GM12878 (cell line): ENCODE measurements at regions of chr16 and their contacts with region 1.

Region 1: DNA sequence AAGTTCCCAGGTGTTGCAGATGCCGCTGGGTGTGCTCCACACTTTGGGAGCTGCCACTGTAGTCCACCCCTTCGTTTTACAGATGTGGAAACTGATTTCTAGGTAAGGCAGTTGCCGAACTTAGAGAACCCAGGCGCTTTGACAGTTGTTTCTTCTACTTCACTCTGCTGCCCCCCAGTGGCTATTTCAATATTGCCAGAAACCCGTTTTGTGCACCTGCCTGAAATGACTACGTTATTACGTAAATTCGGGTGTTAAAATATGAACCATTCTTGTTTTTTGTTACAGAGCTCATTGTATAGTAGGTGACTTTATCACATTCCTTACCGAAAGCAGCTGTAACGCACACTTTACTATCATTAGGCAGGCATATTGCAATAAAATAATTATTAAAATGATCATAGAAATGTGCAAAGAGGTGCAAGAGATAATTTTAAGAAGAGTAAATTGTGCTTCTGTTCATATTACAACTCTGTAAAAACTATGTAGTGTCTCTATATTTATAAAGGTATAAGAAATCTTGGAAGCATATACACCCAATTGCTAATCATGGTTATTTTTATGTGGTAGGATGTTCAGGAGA is 44.9 kb downstream of the OTOA start:
- DNase-seq: peak; percentile 27
- ATAC-seq: peak; percentile 72
- H3K4me3 ChIP-seq: no peak overlapping the region
- H3K27ac ChIP-seq: no peak overlapping the region
- H3K4me1 ChIP-seq: peaks cover 6% of the 10 kb centered on the region
- H3K27me3 ChIP-seq: no peaks in the 10 kb centered on the region; a peak in 1 of 4 replicates
- CTCF ChIP-seq: peak; percentile 65 to 85 (median 85)
- EP300 ChIP-seq: no peak
- POLR2A ChIP-seq: no peak
- RAD21 ChIP-seq: peak; percentile 86

Region 2: GRCh38 chr16:21638573-21638975 is 70.0 kb before region 1 on chr16:
- CTCF ChIA-PET with region 1: interaction called, 99 read pairs
- POLR2A ChIA-PET with region 1: no interaction called
- RAD21 ChIA-PET with region 1: interaction called, 4 read pairs
- SMC1A ChIA-PET with region 1: interaction called, 35 read pairs
- in situ Hi-C with region 1: no loop called
- intact Hi-C with region 1: no loop called
- DNase-seq: no peak
- ATAC-seq: peak; percentile 81
- H3K4me3 ChIP-seq: no peak overlapping the region
- H3K27ac ChIP-seq: no peak overlapping the region
- H3K4me1 ChIP-seq: 0 out of 2 replicates have a peak, but pooled peaks cover 2% of the 10 kb centered on the region
- H3K27me3 ChIP-seq: no peaks in the 10 kb centered on the region
- CTCF ChIP-seq: no peak
- EP300 ChIP-seq: no peak
- POLR2A ChIP-seq: no peak
- RAD21 ChIP-seq: no peak

Region 3: DNA sequence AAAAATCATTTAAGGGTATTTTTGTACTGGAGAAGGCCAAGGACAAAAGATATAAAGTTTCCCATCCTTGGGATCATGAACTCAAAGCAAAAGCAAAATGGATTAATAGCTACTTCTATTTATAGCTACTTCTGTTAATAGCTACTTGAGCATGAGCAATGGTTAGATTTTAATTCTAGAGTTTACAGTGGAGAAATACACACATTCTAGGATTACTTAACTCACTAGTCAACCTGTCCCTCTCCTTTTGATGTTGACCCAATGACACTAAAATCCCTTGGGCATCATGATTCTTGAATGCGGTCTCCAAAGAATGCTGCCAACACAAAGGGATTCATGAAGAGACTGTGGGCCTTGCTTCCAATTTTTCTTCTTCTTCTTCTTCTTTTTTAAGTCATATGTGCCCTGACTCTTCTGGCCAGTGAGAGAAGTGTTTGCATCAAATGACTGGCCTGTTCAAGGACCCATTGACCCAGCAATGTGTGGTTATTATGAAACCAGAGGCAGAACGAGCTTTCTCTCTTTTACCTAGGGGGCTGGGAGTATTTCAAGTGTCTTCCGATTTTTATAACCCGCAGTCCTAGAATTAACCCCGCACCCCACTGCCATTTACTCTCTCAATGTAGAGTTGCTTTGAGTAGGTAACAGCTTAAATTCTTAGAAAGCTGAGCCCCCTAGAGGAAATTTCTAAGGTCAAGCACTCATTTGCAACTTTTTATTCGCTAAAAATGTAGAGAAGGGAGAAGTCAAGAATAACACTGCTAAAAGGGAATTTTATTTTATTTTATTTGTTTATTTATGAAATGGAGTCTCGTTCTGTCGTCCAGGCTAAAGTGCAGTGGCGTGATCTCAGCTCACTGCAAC is 10.2 kb before region 1 on chr16:
- CTCF ChIA-PET with region 1: interaction called, 4 read pairs
- POLR2A ChIA-PET with region 1: no interaction called
- RAD21 ChIA-PET with region 1: interaction called, 3 read pairs
- SMC1A ChIA-PET with region 1: interaction called, 10 read pairs
- in situ Hi-C with region 1: no loop called
- intact Hi-C with region 1: no loop called
- DNase-seq: no peak
- ATAC-seq: peak; percentile 30; the same call in 2 of the 3 replicates
- H3K4me3 ChIP-seq: no peak overlapping the region
- H3K27ac ChIP-seq: no peak overlapping the region
- H3K4me1 ChIP-seq: peaks cover 3% of the 10 kb centered on the region; the same call in 1 of the 2 replicates
- H3K27me3 ChIP-seq: no peaks in the 10 kb centered on the region; a peak in 2 of 4 replicates
- CTCF ChIP-seq: peak in 1 of 3 experiments; percentile 17; a peak in 1 of 6 replicates
- EP300 ChIP-seq: no peak
- POLR2A ChIP-seq: no peak
- RAD21 ChIP-seq: peak; percentile 23; the same call in 1 of the 2 replicates

Region 4: GRCh38 chr16:21727344-21727743 is 18.7 kb after region 1 on chr16:
- CTCF ChIA-PET with region 1: interaction called, 81 read pairs
- POLR2A ChIA-PET with region 1: no interaction called
- RAD21 ChIA-PET with region 1: interaction called, 3 read pairs
- SMC1A ChIA-PET with region 1: interaction called, 39 read pairs
- in situ Hi-C with region 1: no loop called
- intact Hi-C with region 1: no loop called
- DNase-seq: no peak
- ATAC-seq: peak; percentile 72
- H3K4me3 ChIP-seq: no peak overlapping the region
- H3K27ac ChIP-seq: no peak overlapping the region
- H3K4me1 ChIP-seq: peaks cover 3% of the 10 kb centered on the region
- H3K27me3 ChIP-seq: no peaks in the 10 kb centered on the region
- CTCF ChIP-seq: no peak
- EP300 ChIP-seq: no peak
- POLR2A ChIP-seq: no peak
- RAD21 ChIP-seq: no peak